ENCODE measurements at regions of chr15 and their contacts with region 1.

Region 1: DNA sequence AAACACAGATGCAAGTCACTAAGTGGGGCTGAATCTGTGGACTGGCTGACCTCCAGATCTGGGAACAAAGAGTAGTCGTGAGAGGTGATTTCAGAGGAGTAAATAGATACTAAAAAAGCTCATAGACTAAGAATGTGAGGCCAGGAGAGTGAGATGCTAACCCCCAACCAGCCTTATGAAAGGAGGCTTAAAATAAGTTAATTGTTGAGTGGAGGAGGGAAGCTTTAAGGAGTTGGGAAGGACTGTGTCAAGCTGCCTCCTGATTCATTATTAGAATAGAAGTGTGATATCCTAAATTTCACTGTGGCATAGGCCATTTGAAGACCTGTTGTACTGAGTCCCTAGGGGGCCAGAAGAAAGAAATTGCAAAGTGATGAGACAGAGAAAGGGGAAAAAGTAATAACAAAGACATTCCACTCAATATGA is 107.6 kb downstream of the RBPMS2 start:
- DNase-seq: no peak
- ATAC-seq: no peak
- H3K4me3 Mint-ChIP-seq: no peak overlapping the region
- H3K27ac Mint-ChIP-seq: no peak overlapping the region
- H3K4me1 Mint-ChIP-seq: peaks cover 5% of the 10 kb centered on the region
- H3K27me3 Mint-ChIP-seq: no peaks in the 10 kb centered on the region

Region 2: GRCh38 chr15:64536244-64536836 is 131.4 kb before region 1 on chr15:
- CTCF ChIA-PET with region 1: no interaction called
- POLR2A ChIA-PET with region 1: no interaction called
- intact Hi-C with region 1: no loop called
- DNase-seq: peak; percentile 33
- ATAC-seq: peak; percentile 66
- H3K4me3 Mint-ChIP-seq: no peak overlapping the region
- H3K27ac Mint-ChIP-seq: peak overlapping the region; percentile 87
- H3K4me1 Mint-ChIP-seq: peaks cover 57% of the 10 kb centered on the region
- H3K27me3 Mint-ChIP-seq: no peaks in the 10 kb centered on the region

Region 3: GRCh38 chr15:64574301-64575017 is 93.3 kb before region 1 on chr15:
- CTCF ChIA-PET with region 1: no interaction called
- POLR2A ChIA-PET with region 1: interaction called, 10 read pairs
- intact Hi-C with region 1: no loop called
- DNase-seq: no peak
- ATAC-seq: peak; percentile 81
- H3K4me3 Mint-ChIP-seq: no peak overlapping the region
- H3K27ac Mint-ChIP-seq: peak overlapping the region; percentile 64
- H3K4me1 Mint-ChIP-seq: peaks cover 47% of the 10 kb centered on the region
- H3K27me3 Mint-ChIP-seq: no peaks in the 10 kb centered on the region

Measured in activated CD4-positive, alpha-beta T cell treated with anti-CD3 and anti-CD28 coated beads for 36 hours (primary cell).